ENCODE measurements at regions of chr16 and their contacts with region 1.

Region 1: GRCh38 chr16:71794943-71795342 is 13.7 kb downstream of the AP1G1 start:
- DNase-seq: no peak
- ATAC-seq: no peak
- H3K4me3 ChIP-seq: no peak overlapping the region
- H3K4me3 Mint-ChIP-seq: peak overlapping the region in 1 of 3 donors; percentile 39
- H3K27ac ChIP-seq: peak overlapping the region; percentile 10
- H3K27ac Mint-ChIP-seq: peak overlapping the region; percentile 23 to 45
- H3K4me1 ChIP-seq: peaks cover 26 to 40% of the 10 kb centered on the region in 2 experiments
- H3K4me1 Mint-ChIP-seq: peaks cover 70 to 78% (median 70%) of the 10 kb centered on the region in 3 donors
- H3K27me3 ChIP-seq: no peaks in the 10 kb centered on the region
- H3K27me3 Mint-ChIP-seq: no peaks in the 10 kb centered on the region

Region 2: DNA sequence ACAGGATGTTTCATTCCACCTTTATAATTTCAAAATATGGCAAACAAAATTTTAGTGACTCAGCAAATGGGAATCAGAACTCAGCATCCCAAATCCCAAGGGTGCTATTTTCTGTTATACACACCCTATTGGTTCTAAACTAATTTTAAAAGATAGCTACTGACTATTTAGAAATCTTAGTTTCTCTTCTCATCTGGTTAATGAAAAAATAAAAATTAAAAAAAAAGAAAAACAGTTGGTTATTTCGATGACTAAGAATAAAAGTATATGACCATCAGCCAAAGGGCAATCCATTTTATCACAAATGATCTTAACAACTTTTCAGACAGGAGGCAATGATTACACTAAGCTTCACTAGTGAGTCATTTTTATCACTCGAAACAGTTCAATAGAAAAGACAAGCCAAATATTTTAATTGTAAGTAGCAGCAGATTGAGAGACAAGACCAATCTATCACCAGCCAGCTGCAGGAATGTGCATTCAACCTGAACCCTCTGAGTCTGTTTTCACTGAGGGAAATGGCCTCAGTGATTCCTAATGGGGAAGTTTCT is 85.6 kb before region 1 on chr16:
- CTCF ChIA-PET with region 1: no interaction called
- POLR2A ChIA-PET with region 1: no interaction called
- DNase-seq: no peak
- ATAC-seq: no peak
- H3K4me3 ChIP-seq: no peak overlapping the region
- H3K4me3 Mint-ChIP-seq: no peak overlapping the region
- H3K27ac ChIP-seq: no peak overlapping the region
- H3K27ac Mint-ChIP-seq: no peak overlapping the region
- H3K4me1 ChIP-seq: no peaks in the 10 kb centered on the region
- H3K4me1 Mint-ChIP-seq: peaks cover 0 to 2% (median 0%) of the 10 kb centered on the region in 3 donors
- H3K27me3 ChIP-seq: no peaks in the 10 kb centered on the region
- H3K27me3 Mint-ChIP-seq: no peaks in the 10 kb centered on the region

Region 3: GRCh38 chr16:71762186-71762585 is 32.8 kb before region 1 on chr16:
- CTCF ChIA-PET with region 1: no interaction called
- POLR2A ChIA-PET with region 1: interaction called in 1 of 2 experiments, 10 read pairs
- DNase-seq: no peak
- ATAC-seq: no peak
- H3K4me3 ChIP-seq: no peak overlapping the region
- H3K4me3 Mint-ChIP-seq: no peak overlapping the region
- H3K27ac ChIP-seq: no peak overlapping the region
- H3K27ac Mint-ChIP-seq: no peak overlapping the region
- H3K4me1 ChIP-seq: no peaks in the 10 kb centered on the region
- H3K4me1 Mint-ChIP-seq: peaks cover 3 to 6% (median 5%) of the 10 kb centered on the region in 3 donors
- H3K27me3 ChIP-seq: no peaks in the 10 kb centered on the region
- H3K27me3 Mint-ChIP-seq: no peaks in the 10 kb centered on the region

Region 4: DNA sequence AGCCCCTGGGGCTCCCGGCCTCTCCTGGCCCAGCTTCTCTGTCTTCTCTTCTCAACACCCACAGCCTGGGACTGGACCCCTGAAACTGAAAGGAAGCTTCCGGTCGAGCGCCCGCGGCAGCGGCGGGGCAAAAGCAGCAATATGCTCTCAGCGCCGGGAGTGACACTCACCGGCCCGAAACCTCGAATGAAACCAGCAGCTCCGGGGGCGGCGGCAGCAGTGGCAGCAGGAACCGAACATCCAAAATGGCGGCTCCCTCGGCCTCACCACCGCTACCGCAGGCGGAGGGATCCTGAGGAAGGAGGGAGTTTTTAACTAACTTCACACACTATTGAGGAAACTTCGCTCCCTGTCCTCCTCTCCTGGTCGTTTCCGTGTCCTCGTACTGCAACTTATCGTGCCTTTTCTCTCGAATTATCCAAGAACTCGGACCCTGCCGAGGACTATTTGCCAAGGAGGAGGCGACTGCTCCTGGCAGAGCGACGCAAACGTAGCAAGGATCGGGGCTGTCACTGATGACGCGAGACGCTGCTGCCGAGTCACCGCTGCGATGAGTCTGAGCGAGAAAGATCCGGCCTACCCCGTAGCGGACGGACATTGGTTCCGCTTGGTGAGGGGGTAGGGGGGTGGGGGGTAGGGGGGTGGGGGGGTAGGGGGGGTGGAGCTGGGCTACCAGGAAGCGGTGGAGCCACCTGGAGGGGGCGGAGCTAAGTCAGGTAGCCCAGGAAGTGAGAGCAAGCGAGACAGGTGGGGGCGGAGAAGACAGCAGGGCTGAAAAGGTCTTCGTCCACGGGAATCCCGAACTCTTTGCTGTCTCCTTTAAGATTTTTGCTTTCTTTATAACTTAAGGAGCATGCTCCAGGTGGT is 13.9 kb after region 1 on chr16 and contains the start of gene AP1G1:
- CTCF ChIA-PET with region 1: no interaction called
- POLR2A ChIA-PET with region 1: interaction called, 4 to 11 read pairs
- DNase-seq: peak; percentile 82 to 98 (median 93)
- ATAC-seq: peak; percentile 92 to 95 (median 94)
- H3K4me3 ChIP-seq: peak within 1 kb of the TSS; percentile 93 to 98
- H3K4me3 Mint-ChIP-seq: peak within 1 kb of the TSS; percentile 94 to 99 (median 98)
- H3K27ac ChIP-seq: peak within 1 kb of the TSS; percentile 99
- H3K27ac Mint-ChIP-seq: peak within 1 kb of the TSS; percentile 99 to 100
- H3K4me1 ChIP-seq: peaks cover 17 to 44% of the 10 kb centered on the region in 2 experiments
- H3K4me1 Mint-ChIP-seq: peaks cover 35 to 48% (median 39%) of the 10 kb centered on the region in 3 donors
- H3K27me3 ChIP-seq: no peaks in the 10 kb centered on the region
- H3K27me3 Mint-ChIP-seq: no peaks in the 10 kb centered on the region
- total RNA-seq, gene AP1G1: 96.6 to 152 (median 101) TPM